ENCODE measurements at regions of chr3 and their contacts with region 1.

Region 1: GRCh38 chr3:135980343-135980742 is 14.8 kb downstream of the PPP2R3A start:
- DNase-seq: no peak
- H3K4me3 ChIP-seq: no peak overlapping the region
- H3K27ac ChIP-seq: no peak overlapping the region
- H3K4me1 ChIP-seq: peaks cover 0 to 66% (median 40%) of the 10 kb centered on the region in 4 donors
- H3K27me3 ChIP-seq: no peaks in the 10 kb centered on the region
- CTCF ChIP-seq: no peak
- EP300 ChIP-seq: no peak
- POLR2A ChIP-seq: no peak

Region 2: GRCh38 chr3:135731546-135731945 is 248.8 kb before region 1 on chr3:
- intact Hi-C with region 1: no loop called
- DNase-seq: no peak
- H3K4me3 ChIP-seq: no peak overlapping the region
- H3K27ac ChIP-seq: no peak overlapping the region
- H3K4me1 ChIP-seq: no peaks in the 10 kb centered on the region
- H3K27me3 ChIP-seq: no peaks in the 10 kb centered on the region
- CTCF ChIP-seq: no peak
- EP300 ChIP-seq: no peak
- POLR2A ChIP-seq: no peak

Region 3: GRCh38 chr3:136018876-136019275 is 38.5 kb after region 1 on chr3:
- intact Hi-C with region 1: loop called (anchors 1 kb)
- DNase-seq: no peak
- H3K4me3 ChIP-seq: no peak overlapping the region
- H3K27ac ChIP-seq: peak overlapping the region in 1 of 4 donors; percentile 56
- H3K4me1 ChIP-seq: peaks cover 0 to 67% (median 40%) of the 10 kb centered on the region in 4 donors
- H3K27me3 ChIP-seq: no peaks in the 10 kb centered on the region
- CTCF ChIP-seq: no peak
- EP300 ChIP-seq: no peak
- POLR2A ChIP-seq: no peak

Measured in sigmoid colon (tissue), 7 donors.